ENCODE measurements at regions of chr21 and their contacts with region 1.

Region 1: DNA sequence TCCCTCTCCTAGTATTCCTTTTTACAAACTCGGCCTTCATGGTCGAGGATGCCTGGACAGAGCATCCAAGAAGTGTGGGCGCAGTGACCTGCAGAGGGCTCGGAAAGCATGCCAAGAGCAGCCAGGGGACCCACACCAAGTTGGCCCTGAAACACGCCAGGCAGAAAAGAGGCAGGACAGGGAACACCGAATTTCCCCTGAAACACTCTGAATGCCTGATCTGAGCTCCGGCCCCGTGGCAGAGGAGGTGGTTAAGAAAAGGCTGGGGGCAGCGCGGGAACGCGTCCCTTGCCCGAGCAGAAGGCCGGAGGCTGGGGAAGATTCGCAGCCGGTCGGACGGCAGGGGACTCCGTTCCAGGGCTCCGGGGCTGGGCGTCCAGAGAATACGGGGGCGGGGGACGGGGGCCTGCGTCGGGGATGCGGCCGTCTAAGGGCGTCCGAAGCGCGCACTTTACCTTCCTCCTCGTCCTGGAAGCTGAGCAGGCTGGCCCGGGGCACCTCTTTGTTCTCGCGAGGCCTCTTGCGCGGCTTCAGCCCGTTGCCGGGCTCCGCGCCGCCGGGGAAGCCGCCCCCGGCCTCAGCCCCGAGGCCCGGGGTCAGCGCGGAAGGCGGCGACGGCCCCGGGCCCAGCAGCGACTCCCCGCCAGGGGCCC is 558 bp downstream of the PAXBP1 start:
- DNase-seq: peak; percentile 77

Region 2: GRCh38 chr21:32578107-32578692 is 192.8 kb before region 1 on chr21:
- intact Hi-C with region 1: no loop called
- DNase-seq: no peak

Region 3: GRCh38 chr21:32612075-32612998 is 158.7 kb before region 1 on chr21 and contains the start of gene CFAP298:
- intact Hi-C with region 1: loop called (anchors 5 kb)
- DNase-seq: peak; percentile 93
- total RNA-seq, gene CFAP298: 22.0 TPM

Region 4: GRCh38 chr21:32653311-32653901 is 117.6 kb before region 1 on chr21:
- intact Hi-C with region 1: no loop called
- DNase-seq: no peak

Region 5: DNA sequence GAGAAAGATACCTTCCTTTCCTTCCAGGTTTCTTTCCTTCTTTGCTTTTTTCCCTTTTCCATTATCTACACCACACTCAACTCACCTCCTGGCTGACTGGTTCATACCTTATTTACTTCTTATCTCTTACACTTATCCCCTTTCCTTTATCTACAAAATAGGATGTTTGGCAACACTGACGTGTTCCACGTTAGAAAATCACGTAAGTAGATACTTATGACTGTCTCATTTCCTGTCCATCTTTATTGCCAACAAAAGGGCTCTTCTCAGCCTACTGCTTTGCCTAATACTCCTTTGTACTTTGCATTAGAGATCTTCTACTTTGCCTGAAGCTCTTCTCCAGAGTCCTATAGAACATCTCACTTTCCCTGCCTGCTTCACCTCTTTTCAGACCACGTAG is 68.3 kb before region 1 on chr21:
- intact Hi-C with region 1: no loop called
- DNase-seq: no peak